AG04450 (cell line): ENCODE measurements at regions of chr17 and their contacts with region 1.

Region 1: GRCh38 chr17:21043286-21044232 is 748 bp upstream of the USP22 start:
- DNase-seq: peak; percentile 98
- H3K4me3 ChIP-seq: peak overlapping the region; percentile 69
- H3K27ac ChIP-seq: peak overlapping the region; percentile 90
- H3K27me3 ChIP-seq: no peaks in the 10 kb centered on the region
- CTCF ChIP-seq: peak; percentile 80

Region 2: GRCh38 chr17:20184977-20185619 is 858.5 kb before region 1 on chr17:
- CTCF ChIA-PET with region 1: interaction called, 11 read pairs
- POLR2A ChIA-PET with region 1: no interaction called
- DNase-seq: no peak
- H3K4me3 ChIP-seq: no peak overlapping the region
- H3K27ac ChIP-seq: no peak overlapping the region
- H3K27me3 ChIP-seq: no peaks in the 10 kb centered on the region
- CTCF ChIP-seq: no peak

Region 3: DNA sequence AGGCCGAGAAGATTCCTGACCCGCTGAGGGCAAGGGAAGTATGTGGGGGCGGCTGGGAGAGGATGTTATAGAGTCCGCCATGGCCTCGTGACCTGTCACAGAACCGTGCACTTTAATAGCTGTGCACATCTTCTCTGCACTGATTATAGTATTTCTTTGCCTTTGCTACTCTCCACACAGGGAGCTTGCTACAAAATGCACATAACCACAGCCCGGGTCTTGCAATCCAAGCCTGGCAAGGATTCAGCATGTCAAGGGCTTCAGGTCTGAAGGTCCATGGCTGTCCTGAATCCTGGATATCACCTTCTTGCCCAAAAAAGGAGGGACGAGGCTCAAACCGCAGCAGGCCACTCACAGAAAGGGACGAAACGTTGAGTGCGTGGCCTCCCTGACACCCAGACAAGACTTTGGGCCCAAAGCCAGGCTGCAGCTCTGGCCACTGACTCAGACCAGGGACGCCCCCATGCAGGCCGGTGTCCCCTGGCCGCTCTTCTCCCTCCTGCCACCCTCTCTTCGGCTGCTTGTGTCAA is 44.5 kb before region 1 on chr17:
- CTCF ChIA-PET with region 1: no interaction called
- POLR2A ChIA-PET with region 1: no interaction called
- DNase-seq: no peak
- H3K4me3 ChIP-seq: no peak overlapping the region
- H3K27ac ChIP-seq: peak overlapping the region; percentile 21
- H3K27me3 ChIP-seq: no peaks in the 10 kb centered on the region
- CTCF ChIP-seq: no peak

Region 4: GRCh38 chr17:21058098-21058893 is 14.7 kb after region 1 on chr17:
- CTCF ChIA-PET with region 1: interaction called, 11 read pairs
- POLR2A ChIA-PET with region 1: interaction called, 7 read pairs
- DNase-seq: no peak
- H3K4me3 ChIP-seq: no peak overlapping the region
- H3K27ac ChIP-seq: no peak overlapping the region
- H3K27me3 ChIP-seq: peaks cover 13% of the 10 kb centered on the region
- CTCF ChIP-seq: peak; percentile 40

Region 5: DNA sequence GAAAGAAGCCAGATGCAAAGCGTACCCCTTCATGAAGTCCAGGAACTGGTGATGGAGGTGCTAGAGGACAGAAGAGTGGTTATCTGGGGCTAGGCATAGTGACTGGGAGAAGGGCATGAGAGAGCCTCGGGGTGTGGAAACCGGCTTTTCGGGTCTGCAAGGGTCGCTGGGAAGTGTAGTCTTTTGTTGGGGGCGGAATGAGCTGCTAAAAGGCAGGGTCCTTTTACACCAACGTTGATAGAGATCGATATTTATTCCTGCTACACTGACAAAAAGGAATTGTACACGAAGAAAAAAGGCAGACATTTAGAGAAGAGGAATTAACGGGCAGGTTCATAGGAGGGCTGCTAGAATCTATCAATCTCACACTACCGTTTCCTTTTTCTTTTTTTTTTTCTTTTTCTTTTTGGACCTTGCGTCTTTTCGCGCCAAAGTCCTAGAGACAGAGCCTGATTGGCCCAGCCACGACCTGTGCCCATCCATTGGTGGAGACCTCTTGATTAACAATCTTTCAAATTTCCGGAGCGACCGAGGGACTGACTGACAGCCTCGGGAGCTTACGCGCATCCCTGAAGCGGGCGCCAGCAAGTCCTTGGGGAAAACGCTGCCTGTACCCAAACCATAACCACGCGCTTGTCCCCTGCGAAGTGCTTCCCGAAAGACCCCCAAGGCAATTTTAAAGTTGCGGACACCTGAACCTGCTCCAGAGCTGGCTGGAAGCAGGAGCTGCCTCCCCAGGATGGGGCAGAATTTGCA is 55.6 kb after region 1 on chr17:
- CTCF ChIA-PET with region 1: interaction called, 4 read pairs
- POLR2A ChIA-PET with region 1: interaction called, 10 read pairs
- DNase-seq: peak; percentile 16
- H3K4me3 ChIP-seq: peak overlapping the region; percentile 67
- H3K27ac ChIP-seq: no peak overlapping the region
- H3K27me3 ChIP-seq: no peaks in the 10 kb centered on the region
- CTCF ChIP-seq: no peak

Region 6: DNA sequence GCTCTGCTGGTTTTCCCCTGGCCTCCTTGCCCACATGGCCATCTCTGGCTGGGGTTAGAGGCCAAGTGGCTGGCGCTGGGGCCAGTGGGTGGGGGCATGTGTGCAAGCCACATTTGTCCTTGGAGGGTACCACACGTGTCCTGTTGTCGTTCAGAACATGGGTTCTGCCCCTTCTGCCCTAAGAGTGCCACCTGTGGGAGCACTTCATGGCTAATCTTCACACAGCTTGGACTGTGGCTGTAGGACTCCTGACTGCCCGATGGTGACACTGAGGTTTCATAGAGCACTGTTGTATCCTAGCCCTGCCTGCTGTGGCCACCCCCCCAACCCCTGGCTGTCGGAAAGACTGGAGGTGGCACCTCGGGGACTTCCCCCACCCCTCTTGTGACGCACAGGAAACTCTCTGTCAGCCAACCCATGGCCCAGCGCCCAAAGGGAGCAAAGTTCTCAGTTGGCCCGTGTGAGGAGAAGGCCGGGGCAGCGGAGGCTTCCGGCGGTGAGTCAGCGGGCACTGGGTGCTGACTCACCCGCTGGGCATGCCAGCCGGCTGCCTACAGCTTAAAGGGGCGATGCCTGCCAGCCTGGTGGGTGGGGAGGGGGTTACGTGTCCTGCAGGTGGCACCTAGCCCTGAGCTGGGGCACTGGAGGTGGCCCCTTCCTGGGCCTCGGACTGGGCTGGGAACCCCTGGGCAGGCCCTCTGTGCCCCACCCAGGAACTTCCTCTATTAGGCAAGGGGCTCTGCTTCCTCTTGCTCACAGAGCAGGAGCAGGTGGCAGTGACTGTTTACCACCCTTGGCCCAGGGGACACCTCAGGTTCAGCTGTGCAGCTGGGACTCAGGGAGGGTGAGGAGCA is 244.3 kb after region 1 on chr17:
- CTCF ChIA-PET with region 1: interaction called, 3 read pairs
- POLR2A ChIA-PET with region 1: interaction called, 10 read pairs
- DNase-seq: peak; percentile 84
- H3K4me3 ChIP-seq: peak overlapping the region; percentile 86
- H3K27ac ChIP-seq: peak overlapping the region; percentile 94
- H3K27me3 ChIP-seq: no peaks in the 10 kb centered on the region
- CTCF ChIP-seq: no peak